Activated CD8-positive, alpha-beta T cell treated with anti-CD3 and anti-CD28 coated beads for 36 hours (primary cell): ENCODE measurements at regions of chr3 and their contacts with region 1.

Region 1: DNA sequence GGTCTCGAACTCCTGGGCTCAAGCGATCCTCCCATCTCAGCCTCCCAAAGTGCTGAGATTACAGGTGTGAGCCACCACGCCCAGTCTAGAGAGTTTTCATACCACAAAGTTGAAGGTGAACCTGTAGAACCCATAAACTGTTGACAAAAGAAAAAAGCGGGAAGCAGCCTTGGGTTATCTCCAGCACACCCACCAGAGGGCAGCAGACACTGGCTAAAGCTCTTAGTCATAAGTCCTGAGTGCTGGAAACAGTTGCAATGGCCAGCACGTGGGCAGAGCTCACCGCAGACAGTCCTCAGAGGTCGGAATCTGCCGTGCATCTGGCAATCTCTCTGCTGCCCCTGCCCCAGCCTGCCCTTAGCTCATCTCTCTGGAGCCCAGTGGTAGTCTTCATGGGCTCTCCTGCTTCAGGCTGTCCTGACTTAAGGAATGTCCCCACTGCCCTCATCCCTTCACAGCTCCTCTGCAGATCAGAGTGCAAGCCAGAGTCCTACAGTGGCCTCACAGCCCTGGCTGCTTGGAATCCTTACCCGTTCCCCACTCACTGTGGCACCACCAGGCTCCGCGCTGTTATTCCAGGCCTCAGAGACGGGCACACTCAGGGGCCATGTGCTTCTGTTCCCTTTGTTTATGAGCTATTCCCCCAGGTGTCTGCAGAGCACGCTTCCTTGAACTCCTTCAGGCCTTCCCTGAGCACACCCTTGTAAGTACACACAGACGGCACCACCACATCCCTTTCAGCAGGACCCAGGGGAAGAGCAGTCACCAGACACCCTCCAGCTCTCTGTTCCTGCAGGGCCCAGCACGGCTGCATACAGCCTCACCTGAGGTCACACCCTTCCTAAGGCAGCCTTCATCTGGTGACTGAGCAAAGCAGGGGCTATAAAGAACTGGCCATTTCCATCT is 8.8 kb upstream of the ELP6 start:
- DNase-seq: peak; percentile 90
- ATAC-seq: peak; percentile 94
- H3K4me3 Mint-ChIP-seq: no peak overlapping the region
- H3K27ac Mint-ChIP-seq: peak overlapping the region; percentile 31
- H3K4me1 Mint-ChIP-seq: peaks cover 7% of the 10 kb centered on the region
- H3K27me3 Mint-ChIP-seq: no peaks in the 10 kb centered on the region
- CTCF ChIP-seq: peak; percentile 94

Region 2: DNA sequence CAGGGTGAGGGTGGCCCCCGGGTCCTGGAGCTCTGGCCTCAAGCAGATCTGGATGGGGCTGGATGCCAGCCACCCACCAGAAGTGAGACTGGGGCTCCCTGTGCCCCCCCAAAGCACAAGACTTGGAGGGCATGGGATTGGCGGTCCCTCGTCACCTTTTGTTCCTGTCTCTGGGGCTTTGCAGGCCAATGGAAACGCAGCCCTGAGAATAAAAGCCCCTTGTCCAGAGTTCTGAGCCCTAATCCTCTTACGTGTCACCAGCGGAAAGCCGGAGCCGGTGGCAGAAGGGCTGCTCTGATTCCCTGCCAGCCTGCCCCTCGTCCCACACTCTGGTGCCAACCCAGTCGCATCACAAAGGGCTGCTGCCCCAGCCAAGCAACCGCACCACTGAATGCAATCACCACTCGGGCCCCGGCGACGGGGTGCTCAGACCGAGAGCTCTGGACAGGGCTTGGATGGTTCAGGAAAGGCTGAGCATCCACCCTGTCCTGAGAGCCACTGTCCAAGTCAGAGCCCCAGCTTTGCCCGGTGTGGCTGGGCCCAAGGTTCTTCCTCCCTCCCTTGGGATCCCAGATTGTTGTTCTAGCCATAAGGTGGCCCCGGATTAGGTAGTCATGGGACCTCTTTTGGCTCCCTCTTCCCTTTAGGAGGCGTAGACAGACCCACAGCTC is 14.0 kb after region 1 on chr3:
- CTCF ChIA-PET with region 1: interaction called, 25 read pairs
- POLR2A ChIA-PET with region 1: interaction called, 3 read pairs
- intact Hi-C with region 1: no loop called
- DNase-seq: no peak
- ATAC-seq: no peak
- H3K4me3 Mint-ChIP-seq: no peak overlapping the region
- H3K27ac Mint-ChIP-seq: no peak overlapping the region
- H3K4me1 Mint-ChIP-seq: no peaks in the 10 kb centered on the region
- H3K27me3 Mint-ChIP-seq: peaks cover 5% of the 10 kb centered on the region
- CTCF ChIP-seq: no peak

Region 3: DNA sequence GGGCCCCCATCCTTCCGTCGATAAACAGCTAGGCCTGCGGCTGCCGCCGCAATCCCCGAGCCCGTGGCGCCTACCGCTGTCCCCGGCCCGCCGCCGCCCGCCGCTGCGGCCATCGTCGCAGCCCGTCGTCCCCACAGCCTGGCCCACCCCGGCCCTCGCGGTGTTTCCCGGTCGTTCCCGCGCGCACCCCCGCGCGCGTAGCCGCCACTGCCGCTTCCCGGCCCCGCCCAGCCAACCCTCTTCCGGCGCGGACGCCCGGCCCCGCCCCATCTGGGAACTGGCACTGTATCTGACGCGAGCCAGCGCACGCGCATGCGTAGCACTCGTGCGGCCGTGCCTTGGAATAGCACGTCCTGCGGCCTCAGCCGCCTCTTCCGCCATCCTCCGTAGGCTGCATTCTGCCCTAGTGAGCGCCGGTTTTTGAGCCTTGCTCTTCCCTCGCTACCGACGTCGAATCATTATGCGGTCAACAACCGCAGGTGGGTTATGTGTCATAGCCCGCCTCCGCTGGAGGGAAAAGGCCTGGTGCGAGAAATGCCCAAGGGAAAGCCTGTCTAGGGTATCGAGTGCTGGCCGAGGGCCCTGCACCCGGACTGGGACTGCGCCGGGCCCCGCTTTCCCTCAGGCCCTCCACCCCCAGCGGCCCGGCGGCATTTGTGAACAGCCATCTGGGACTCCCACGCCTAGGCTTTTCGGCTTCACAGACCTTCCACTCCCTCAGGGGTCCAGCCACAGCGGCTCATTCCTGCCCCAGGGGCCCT is 259.5 kb after region 1 on chr3 and contains the start of gene SMARCC1:
- CTCF ChIA-PET with region 1: interaction called, 11 read pairs
- POLR2A ChIA-PET with region 1: interaction called, 5 read pairs
- intact Hi-C with region 1: no loop called
- DNase-seq: peak; percentile 99
- ATAC-seq: peak; percentile 96
- H3K4me3 Mint-ChIP-seq: peak within 1 kb of the TSS; percentile 97
- H3K27ac Mint-ChIP-seq: peak within 1 kb of the TSS; percentile 96
- H3K4me1 Mint-ChIP-seq: peaks cover 15% of the 10 kb centered on the region
- H3K27me3 Mint-ChIP-seq: no peaks in the 10 kb centered on the region
- CTCF ChIP-seq: no peak
- total RNA-seq, gene SMARCC1: 106 to 113 TPM

Region 4: DNA sequence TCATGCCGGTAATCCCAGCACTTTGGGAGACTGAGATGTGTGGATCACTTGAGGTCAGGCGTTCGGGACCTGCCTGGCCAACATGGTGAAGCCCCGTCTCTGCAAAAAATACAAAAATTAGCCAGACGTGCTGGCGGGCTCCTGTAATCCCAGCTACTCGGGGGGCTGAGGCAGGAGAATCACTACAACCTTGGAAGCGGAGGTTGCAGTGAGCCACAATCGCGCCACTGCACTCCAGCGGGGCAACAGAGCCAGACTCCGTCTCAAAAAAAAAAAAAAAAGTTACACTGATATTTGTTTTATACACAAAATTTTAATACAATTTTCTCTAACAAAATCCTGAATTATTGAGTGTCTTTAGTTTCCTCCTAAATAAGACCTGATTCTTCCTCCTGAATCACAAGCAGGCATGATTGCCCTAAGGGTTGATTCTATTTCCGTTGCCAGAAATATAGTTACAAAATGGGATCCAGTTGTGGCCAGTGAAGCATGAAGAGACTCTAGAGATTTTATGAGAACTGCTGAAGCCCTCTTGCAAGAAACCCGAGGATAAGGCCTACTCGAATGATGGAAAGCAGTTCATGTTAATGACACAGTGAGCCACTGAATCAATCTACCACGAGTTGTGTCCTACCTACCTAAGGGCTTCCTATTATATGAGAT is 269.0 kb after region 1 on chr3:
- CTCF ChIA-PET with region 1: interaction called, 30 read pairs
- POLR2A ChIA-PET with region 1: no interaction called
- intact Hi-C with region 1: loop called (anchors 2 kb)
- DNase-seq: no peak
- ATAC-seq: no peak
- H3K4me3 Mint-ChIP-seq: no peak overlapping the region
- H3K27ac Mint-ChIP-seq: no peak overlapping the region
- H3K4me1 Mint-ChIP-seq: peaks cover 2% of the 10 kb centered on the region
- H3K27me3 Mint-ChIP-seq: no peaks in the 10 kb centered on the region
- CTCF ChIP-seq: no peak